Thyroid gland (tissue), 4 donors: ENCODE measurements at regions of chr12 and their contacts with region 1.

Region 1: DNA sequence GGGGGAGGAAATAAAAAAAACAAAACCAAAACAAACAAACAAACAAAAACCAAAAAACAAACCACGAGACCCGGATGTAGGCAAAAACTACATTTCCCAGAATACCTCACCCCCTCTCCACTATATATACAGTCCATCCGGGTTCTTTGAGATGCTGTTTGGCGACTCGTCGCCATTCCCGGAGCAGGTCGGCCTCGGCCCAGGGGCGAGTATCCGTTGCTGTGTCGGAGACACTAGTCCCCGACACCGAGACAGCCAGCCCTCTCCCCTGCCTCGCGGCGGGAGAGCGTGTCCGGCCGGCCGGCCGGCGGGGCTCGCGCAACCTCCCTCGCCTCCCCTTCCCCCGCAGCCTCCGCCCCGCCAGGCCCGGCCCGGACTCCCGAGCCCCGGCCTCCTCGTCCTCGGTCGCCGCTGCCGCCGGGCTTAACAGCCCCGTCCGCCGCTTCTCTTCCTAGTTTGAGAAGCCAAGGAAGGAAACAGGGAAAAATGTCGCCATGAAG is at the start of gene RNF10:
- DNase-seq: peak; percentile 68 to 70
- H3K4me3 ChIP-seq: peak within 1 kb of the TSS; percentile 96 to 99 (median 99)
- H3K27ac ChIP-seq: peak within 1 kb of the TSS; percentile 90 to 94 (median 92)
- H3K4me1 ChIP-seq: peaks cover 35 to 43% of the 10 kb centered on the region in 2 donors
- H3K27me3 ChIP-seq: no peaks in the 10 kb centered on the region
- CTCF ChIP-seq: no peak
- POLR2A ChIP-seq: peak; percentile 88 to 95
- total RNA-seq, gene RNF10: 62.5 to 159 (median 127) TPM

Region 2: DNA sequence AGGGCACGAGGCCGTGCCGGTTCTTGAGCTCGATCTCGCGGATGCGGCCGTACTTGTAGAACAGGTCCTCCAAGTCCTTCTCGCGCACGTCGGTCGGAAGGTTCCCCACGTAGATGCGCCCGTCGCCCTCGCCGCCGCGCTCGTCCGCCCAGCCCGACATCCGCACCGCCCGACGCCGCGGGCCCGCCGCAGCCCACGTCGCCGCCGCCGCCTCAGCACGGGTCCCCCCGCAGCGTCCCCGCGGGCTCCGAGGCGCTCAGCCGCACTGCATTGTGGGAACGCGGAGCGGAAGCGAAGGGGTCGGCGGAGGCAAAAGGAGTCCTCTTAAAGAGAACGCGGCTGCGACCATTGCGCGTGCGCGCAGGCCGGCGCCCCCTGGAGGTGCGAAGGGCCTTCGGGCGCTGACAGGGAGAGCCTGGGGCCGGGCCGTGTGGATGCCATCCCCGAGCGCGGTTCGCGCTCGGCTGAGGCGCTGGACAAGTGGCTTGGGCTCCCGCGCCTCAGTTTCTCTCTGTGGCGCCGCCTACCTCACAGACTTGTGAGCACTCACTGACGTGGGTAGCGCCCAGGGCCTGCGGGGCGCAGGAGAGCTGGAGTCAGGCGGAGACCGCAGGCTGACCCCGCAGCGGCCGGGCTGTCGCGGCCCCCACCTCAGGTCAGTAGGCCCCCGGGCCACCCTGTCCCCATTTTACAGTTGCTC is 64.7 kb before region 1 on chr12 and contains the start of gene SRSF9:
- intact Hi-C with region 1: no loop called
- DNase-seq: peak; percentile 93 to 95
- H3K4me3 ChIP-seq: peak within 1 kb of the TSS; percentile 63 to 91 (median 87)
- H3K27ac ChIP-seq: peak within 1 kb of the TSS; percentile 80 to 88 (median 86)
- H3K4me1 ChIP-seq: peaks cover 11 to 16% of the 10 kb centered on the region in 2 donors
- H3K27me3 ChIP-seq: no peaks in the 10 kb centered on the region
- CTCF ChIP-seq: peak; percentile 62 to 95 (median 85)
- POLR2A ChIP-seq: peak in 1 of 2 donors; percentile 78
- total RNA-seq, gene SRSF9: 64.5 to 107 (median 79.9) TPM

Region 3: GRCh38 chr12:120495723-120496412 is 38.4 kb before region 1 on chr12 and contains the start of gene DYNLL1:
- intact Hi-C with region 1: loop called (anchors 5 kb)
- DNase-seq: peak; percentile 95
- H3K4me3 ChIP-seq: peak within 1 kb of the TSS; percentile 63 to 92 (median 80)
- H3K27ac ChIP-seq: peak within 1 kb of the TSS; percentile 50 to 93 (median 91)
- H3K4me1 ChIP-seq: peaks cover 6 to 11% of the 10 kb centered on the region in 2 donors
- H3K27me3 ChIP-seq: no peaks in the 10 kb centered on the region
- CTCF ChIP-seq: peak in 1 of 6 experiments; percentile 31
- POLR2A ChIP-seq: peak; percentile 67 to 93
- total RNA-seq, gene DYNLL1: 128 to 265 (median 232) TPM